AG04450 (cell line): ENCODE measurements at regions of chr3 and their contacts with region 1.

Region 1: GRCh38 chr3:138915503-138916498 is 31.1 kb downstream of the FOXL2 start:
- DNase-seq: peak; percentile 75
- H3K4me3 ChIP-seq: peak overlapping the region; percentile 90
- H3K27ac ChIP-seq: peak overlapping the region; percentile 95
- H3K27me3 ChIP-seq: no peaks in the 10 kb centered on the region
- CTCF ChIP-seq: peak; percentile 76

Region 2: GRCh38 chr3:138227650-138228049 is 688.2 kb before region 1 on chr3:
- CTCF ChIA-PET with region 1: interaction called, 3 read pairs
- POLR2A ChIA-PET with region 1: interaction called, 10 read pairs
- DNase-seq: peak; percentile 21
- H3K4me3 ChIP-seq: no peak overlapping the region
- H3K27ac ChIP-seq: no peak overlapping the region
- H3K27me3 ChIP-seq: no peaks in the 10 kb centered on the region
- CTCF ChIP-seq: no peak

Region 3: GRCh38 chr3:138608322-138609135 is 307.3 kb before region 1 on chr3 and contains the start of gene FAIM:
- CTCF ChIA-PET with region 1: interaction called, 18 read pairs
- POLR2A ChIA-PET with region 1: interaction called, 11 read pairs
- DNase-seq: peak; percentile 18
- H3K4me3 ChIP-seq: peak within 1 kb of the TSS; percentile 65
- H3K27ac ChIP-seq: peak within 1 kb of the TSS; percentile 70
- H3K27me3 ChIP-seq: no peaks in the 10 kb centered on the region
- CTCF ChIP-seq: no peak
- polyA plus RNA-seq, gene FAIM: 4.5 and 5.7 TPM in 2 replicates

Region 4: DNA sequence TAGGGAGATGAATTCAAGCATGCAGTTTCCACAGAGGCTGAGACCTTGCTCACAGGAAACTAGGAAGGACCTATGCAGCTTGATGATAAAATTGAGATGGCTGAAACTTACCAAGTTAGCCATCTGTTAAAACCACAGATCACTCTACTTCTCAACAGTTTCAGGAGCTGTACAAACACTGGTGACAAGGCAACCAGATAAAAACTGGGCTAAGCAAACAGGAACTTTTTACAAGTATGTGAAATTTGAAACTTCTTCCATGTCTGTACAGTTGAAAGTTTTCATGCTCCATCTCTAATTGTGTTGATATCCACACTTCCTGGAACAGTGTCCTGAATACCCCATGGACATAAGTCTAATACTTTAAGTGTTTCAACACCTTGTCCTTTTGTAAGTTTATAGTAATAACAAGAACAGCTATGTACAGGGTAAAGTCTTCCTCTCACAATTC is 229.0 kb before region 1 on chr3:
- CTCF ChIA-PET with region 1: interaction called, 794 read pairs
- POLR2A ChIA-PET with region 1: interaction called, 5 read pairs
- DNase-seq: peak; percentile 45
- H3K4me3 ChIP-seq: no peak overlapping the region
- H3K27ac ChIP-seq: no peak overlapping the region
- H3K27me3 ChIP-seq: no peaks in the 10 kb centered on the region
- CTCF ChIP-seq: no peak

Region 5: GRCh38 chr3:138747225-138747624 is 168.6 kb before region 1 on chr3:
- CTCF ChIA-PET with region 1: interaction called, 14 read pairs
- POLR2A ChIA-PET with region 1: no interaction called
- DNase-seq: no peak
- H3K4me3 ChIP-seq: no peak overlapping the region
- H3K27ac ChIP-seq: no peak overlapping the region
- H3K27me3 ChIP-seq: no peaks in the 10 kb centered on the region
- CTCF ChIP-seq: no peak

Region 6: GRCh38 chr3:138824114-138824506 is 91.7 kb before region 1 on chr3:
- CTCF ChIA-PET with region 1: interaction called, 12 read pairs
- POLR2A ChIA-PET with region 1: no interaction called
- DNase-seq: no peak
- H3K4me3 ChIP-seq: no peak overlapping the region
- H3K27ac ChIP-seq: peak overlapping the region; percentile 47
- H3K27me3 ChIP-seq: no peaks in the 10 kb centered on the region
- CTCF ChIP-seq: no peak

Region 7: DNA sequence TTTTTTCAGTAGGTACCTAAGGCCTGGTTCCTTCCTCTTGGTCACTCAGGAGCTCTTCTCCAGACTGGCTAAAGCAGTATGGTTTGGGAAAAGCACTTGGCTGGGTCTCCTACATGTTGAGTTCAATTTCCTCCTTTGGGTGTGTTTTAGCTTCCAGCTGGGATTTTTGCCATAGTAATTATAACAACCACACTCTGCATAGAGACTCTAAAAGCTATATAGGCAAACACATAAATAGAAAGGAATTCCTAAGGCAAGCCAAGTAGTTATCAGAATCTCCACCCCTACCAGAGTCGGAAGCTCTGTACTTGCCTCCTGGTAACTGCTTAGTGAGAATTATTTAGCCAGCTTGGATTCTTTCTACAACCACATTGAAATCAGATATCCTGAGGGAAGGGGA is 17.5 kb before region 1 on chr3:
- CTCF ChIA-PET with region 1: interaction called, 104 read pairs
- POLR2A ChIA-PET with region 1: interaction called, 7 read pairs
- DNase-seq: no peak
- H3K4me3 ChIP-seq: no peak overlapping the region
- H3K27ac ChIP-seq: no peak overlapping the region
- H3K27me3 ChIP-seq: no peaks in the 10 kb centered on the region
- CTCF ChIP-seq: no peak

Region 8: GRCh38 chr3:139062915-139063314 is 147.1 kb after region 1 on chr3:
- CTCF ChIA-PET with region 1: no interaction called
- POLR2A ChIA-PET with region 1: no interaction called
- DNase-seq: no peak
- H3K4me3 ChIP-seq: no peak overlapping the region
- H3K27ac ChIP-seq: no peak overlapping the region
- H3K27me3 ChIP-seq: no peaks in the 10 kb centered on the region
- CTCF ChIP-seq: no peak

Region 9: DNA sequence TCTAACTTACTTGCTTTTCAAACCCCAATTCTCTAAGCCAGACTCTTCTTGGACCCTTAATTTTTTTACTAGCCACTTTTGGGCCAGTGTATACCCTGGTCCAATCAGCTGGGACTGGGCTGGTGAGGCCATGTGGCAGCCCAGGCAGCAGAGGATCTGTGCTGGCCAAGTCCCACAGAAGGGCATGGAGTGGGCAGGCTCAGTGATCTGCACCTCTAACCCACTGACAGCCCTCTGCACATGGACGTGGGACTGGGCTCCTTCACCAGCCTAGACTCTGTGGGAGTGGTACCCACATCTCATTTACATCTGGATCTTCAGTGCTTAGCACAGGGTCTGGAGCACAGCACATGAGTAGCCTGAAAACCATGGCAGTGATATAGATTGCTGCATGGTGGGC is 185.0 kb after region 1 on chr3:
- CTCF ChIA-PET with region 1: no interaction called
- POLR2A ChIA-PET with region 1: no interaction called
- DNase-seq: no peak
- H3K4me3 ChIP-seq: no peak overlapping the region
- H3K27ac ChIP-seq: no peak overlapping the region
- H3K27me3 ChIP-seq: peaks cover 18% of the 10 kb centered on the region
- CTCF ChIP-seq: no peak